ENCODE measurements at regions of chr1 and their contacts with region 1.

Region 1: DNA sequence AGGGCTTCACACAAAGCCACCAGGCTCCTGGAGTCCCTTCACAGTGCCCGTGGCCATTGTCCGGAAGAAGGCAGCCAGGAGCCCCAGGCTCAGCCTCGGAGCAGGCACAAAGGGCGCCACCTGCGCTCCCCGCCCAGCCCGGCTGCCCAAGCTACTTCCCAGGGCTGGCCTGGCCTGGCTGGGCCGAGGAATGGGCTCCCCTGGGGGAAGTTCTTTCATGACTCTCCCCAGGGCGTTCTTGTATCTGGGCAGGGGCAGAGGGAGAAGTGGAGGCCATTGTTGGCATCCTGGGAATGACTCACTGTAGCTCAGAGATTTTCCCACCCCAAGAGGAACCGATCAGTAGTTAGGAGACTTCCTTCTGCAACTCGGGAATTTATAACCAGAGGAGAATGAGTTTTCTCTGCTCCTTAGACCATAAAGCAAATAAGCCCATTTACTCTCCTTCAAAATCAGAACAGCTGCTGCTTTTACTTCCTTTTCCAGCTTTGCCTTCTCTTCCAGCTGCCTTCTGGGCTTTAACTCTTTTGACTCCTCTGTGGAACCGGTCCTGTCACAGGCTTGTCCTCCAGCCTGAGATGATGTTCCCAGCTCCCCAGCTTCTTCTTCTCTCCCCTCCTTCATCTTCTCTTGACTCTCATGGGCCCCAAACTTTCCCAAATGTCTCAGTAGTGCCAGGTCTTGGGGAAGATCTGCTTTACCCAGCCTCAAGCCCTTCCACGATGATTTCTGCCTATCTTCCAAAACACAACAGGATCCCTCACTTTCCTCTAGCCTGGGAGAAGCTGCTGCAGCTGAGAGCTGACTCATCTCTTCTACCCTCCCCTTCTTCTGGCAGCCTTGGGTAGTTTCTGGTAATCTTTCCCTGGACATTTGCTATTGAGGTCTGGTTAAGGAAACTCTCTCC is 118.7 kb upstream of the CD34 start:
- DNase-seq: peak; percentile 66
- H3K4me3 ChIP-seq: no peak overlapping the region
- CTCF ChIP-seq: no peak

Region 2: GRCh38 chr1:207965392-207966387 is 63.9 kb before region 1 on chr1:
- in situ Hi-C with region 1: no loop called
- DNase-seq: no peak
- H3K4me3 ChIP-seq: no peak overlapping the region
- CTCF ChIP-seq: no peak

Region 3: DNA sequence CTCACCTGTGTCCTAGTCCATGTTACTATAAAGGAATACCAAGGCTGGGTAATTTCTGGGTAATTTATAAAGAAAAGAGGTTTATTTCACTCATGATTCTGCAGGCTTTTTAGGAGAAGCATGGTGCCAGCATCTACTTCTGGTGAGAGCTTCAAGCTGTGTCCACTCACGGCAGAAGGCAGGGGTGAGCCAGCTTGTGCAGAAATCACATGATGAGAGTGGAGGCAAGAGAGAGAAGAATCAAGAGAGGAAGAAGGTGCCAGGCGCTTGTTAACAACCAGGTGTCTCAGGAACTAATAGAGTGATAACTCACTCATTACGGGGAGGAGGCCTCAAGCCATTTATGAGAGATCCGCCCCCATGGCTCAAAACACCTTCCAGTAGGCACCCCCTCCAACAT is 51.2 kb before region 1 on chr1:
- in situ Hi-C with region 1: no loop called
- DNase-seq: no peak
- H3K4me3 ChIP-seq: no peak overlapping the region
- CTCF ChIP-seq: no peak

Region 4: GRCh38 chr1:208233546-208233945 is 203.9 kb after region 1 on chr1:
- in situ Hi-C with region 1: loop called (anchors 5 kb)
- DNase-seq: no peak
- H3K4me3 ChIP-seq: no peak overlapping the region
- CTCF ChIP-seq: no peak

Region 5: DNA sequence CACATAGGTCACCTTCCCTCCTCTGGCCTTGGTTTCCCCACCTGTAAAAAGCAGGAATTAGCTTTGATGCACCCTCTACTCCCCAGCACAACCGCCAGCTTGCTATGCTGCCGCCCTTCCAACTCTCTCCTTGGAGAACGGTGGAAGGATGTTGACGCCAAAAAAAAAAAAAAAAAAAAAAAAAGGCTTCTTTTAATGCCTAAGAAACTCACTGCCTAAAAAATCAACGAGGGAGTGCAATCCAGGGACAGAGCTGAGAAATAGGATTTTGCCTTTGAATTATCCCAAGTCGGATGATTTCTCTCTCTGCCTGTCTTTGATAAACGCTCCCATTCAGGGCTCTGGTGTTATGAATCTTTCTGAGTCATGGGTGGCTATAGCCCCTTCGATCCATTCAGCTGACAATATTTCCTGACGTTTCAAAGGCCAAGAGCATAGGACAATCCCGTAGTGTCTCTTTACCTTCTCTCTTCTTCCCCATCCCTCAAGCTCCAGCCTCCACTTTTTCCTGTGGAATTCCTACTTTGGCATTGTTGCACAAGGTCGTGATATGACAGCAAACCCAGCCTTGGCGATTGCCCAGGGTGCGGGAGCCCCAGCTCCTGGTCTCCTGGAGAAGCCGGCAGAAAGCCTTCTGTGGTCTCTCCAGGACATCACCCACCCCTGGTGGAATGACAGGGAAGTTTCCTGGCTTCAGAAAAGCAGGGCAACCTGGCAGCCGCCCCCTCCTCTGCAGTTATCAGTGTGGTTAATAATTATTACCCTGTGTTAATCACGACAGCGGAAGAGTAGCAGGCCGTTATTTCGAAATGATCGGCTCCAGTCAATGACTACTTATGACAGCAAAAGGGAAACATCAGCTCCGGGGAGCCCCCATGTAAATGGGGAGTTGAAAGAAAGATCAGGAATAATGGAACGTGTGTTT is 222.5 kb after region 1 on chr1:
- in situ Hi-C with region 1: no loop called
- DNase-seq: no peak
- H3K4me3 ChIP-seq: no peak overlapping the region
- CTCF ChIP-seq: peak; percentile 62

Region 6: GRCh38 chr1:209190591-209191261 is 1161.1 kb after region 1 on chr1:
- in situ Hi-C with region 1: loop called (anchors 10 kb)
- DNase-seq: peak; percentile 55
- H3K4me3 ChIP-seq: no peak overlapping the region
- CTCF ChIP-seq: peak; percentile 93